ENCODE measurements at regions of chr1 and their contacts with region 1.

Region 1: GRCh38 chr1:84603941-84604830 is 29.9 kb upstream of the CTBS start:
- DNase-seq: peak; percentile 91
- H3K4me3 ChIP-seq: peak overlapping the region in 2 of 3 experiments; percentile 11 to 46
- H3K27ac ChIP-seq: peak overlapping the region; percentile 88
- H3K4me1 ChIP-seq: peaks cover 30% of the 10 kb centered on the region
- H3K27me3 ChIP-seq: no peaks in the 10 kb centered on the region
- CTCF ChIP-seq: peak; percentile 66 to 77
- POLR2A ChIP-seq: no peak

Region 2: GRCh38 chr1:83931658-83932253 is 672.4 kb before region 1 on chr1:
- CTCF ChIA-PET with region 1: interaction called, 9 read pairs
- POLR2A ChIA-PET with region 1: no interaction called
- dilution Hi-C with region 1: no loop called
- intact Hi-C with region 1: loop called (anchors 1 kb)
- DNase-seq: peak; percentile 48
- H3K4me3 ChIP-seq: no peak overlapping the region
- H3K27ac ChIP-seq: no peak overlapping the region
- H3K4me1 ChIP-seq: no peaks in the 10 kb centered on the region
- H3K27me3 ChIP-seq: no peaks in the 10 kb centered on the region
- CTCF ChIP-seq: peak; percentile 33 to 42
- POLR2A ChIP-seq: no peak

Region 3: GRCh38 chr1:84298328-84298683 is 305.9 kb before region 1 on chr1:
- CTCF ChIA-PET with region 1: no interaction called
- POLR2A ChIA-PET with region 1: no interaction called
- dilution Hi-C with region 1: no loop called
- intact Hi-C with region 1: loop called (anchors 1 kb)
- DNase-seq: peak; percentile 61
- H3K4me3 ChIP-seq: peak overlapping the region; percentile 72 to 94 (median 78)
- H3K27ac ChIP-seq: peak overlapping the region; percentile 75
- H3K4me1 ChIP-seq: peaks cover 46% of the 10 kb centered on the region
- H3K27me3 ChIP-seq: no peaks in the 10 kb centered on the region
- CTCF ChIP-seq: no peak
- POLR2A ChIP-seq: peak; percentile 73

Region 4: DNA sequence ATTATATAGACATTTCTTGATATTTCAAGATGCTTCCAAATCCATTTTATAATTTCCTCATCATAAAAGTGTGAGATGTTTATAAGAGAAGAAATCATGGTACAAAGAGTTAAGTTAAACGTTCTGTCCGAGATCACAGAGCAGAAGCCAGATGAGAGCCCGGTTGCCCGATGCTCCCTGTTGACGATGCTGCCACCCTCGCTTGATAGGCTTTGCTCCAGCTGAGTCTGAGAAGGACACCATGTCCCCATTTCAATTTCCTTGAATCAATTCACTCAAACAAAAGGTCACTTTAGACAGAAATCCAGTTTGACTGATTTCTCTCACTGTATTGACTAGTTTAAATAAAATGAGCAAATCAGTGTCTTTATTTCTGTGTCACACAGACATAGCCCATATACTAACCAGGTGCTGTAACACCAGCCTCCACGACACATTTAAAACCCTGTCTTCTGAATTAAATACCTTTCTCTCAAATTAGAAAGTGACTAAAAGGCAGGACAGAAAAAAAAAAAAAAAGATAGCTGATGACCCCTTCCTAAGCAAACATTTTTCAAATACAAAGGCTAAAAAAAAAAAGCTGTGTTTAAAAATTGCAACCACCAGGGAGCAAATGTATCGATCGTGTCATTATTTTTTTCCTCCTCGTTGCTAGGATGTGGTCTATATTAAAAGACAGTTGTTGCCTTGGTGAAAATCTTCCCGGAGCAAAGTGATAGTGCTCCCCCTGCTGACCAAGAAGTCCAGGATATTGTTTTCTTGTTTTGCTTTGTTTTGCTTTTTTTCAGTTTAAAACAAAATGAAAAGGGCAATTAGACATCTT is 170.7 kb before region 1 on chr1:
- CTCF ChIA-PET with region 1: interaction called, 7 read pairs
- POLR2A ChIA-PET with region 1: no interaction called
- dilution Hi-C with region 1: loop called (anchors 25 kb)
- intact Hi-C with region 1: loop called (anchors 2 kb)
- DNase-seq: peak; percentile 81
- H3K4me3 ChIP-seq: peak overlapping the region in 1 of 3 experiments; percentile 52
- H3K27ac ChIP-seq: peak overlapping the region; percentile 69
- H3K4me1 ChIP-seq: peaks cover 5% of the 10 kb centered on the region
- H3K27me3 ChIP-seq: no peaks in the 10 kb centered on the region
- CTCF ChIP-seq: peak; percentile 64 to 67
- POLR2A ChIP-seq: no peak

Region 5: DNA sequence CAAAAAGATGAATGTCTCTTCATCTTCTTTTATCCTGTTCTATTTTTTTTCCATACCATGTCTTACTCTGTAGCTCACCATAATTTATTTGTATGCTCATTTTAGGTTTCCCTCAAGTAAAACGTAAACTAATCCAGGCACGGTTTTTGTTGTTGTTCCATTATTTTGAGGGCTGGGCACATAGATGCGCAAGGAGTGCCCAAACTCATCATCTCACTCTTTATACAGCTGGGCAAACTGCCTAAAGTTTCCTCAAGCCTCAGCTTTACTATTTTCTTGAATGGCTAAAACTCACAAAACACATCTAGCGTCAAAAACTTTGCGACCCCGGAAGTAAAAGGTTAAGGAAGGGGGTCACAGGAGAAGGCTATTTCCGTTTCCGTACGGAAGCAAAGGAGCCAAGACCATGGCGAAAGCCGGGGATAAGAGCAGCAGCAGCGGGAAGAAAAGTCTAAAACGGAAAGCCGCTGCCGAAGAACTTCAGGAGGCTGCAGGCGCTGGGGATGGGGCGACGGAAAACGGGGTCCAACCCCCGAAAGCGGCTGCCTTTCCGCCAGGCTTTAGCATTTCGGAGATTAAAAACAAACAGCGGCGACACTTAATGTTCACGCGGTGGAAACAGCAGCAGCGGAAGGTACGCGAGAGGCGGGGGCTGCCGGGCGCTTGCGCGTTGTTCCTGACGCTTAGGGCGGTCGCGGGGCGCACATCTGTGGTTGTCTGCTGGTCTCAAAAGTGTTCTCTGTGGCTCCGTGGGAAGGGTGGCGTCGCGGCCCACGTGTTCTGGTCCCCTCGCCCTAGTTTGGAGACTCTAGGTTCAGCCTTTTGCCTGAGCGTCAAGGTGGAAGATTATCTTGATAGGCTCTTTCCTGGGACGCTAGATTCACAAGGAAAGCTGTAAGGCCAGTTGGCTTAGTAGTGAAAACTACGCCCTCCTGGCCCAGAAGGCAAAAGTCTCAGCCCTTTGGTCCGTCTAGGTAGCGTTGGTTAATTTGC is 125.0 kb before region 1 on chr1 and contains the start of gene RPF1:
- CTCF ChIA-PET with region 1: interaction called, 18 read pairs
- POLR2A ChIA-PET with region 1: interaction called, 3 read pairs
- dilution Hi-C with region 1: no loop called
- intact Hi-C with region 1: loop called (anchors 1 kb)
- DNase-seq: peak; percentile 85
- H3K4me3 ChIP-seq: peak within 1 kb of the TSS; percentile 59 to 95 (median 64)
- H3K27ac ChIP-seq: peak within 1 kb of the TSS; percentile 66
- H3K4me1 ChIP-seq: peaks cover 17% of the 10 kb centered on the region
- H3K27me3 ChIP-seq: no peaks in the 10 kb centered on the region
- CTCF ChIP-seq: no peak
- POLR2A ChIP-seq: peak; percentile 68
- total RNA-seq, gene RPF1: 32.6 and 34.3 TPM in 2 replicates

Region 6: GRCh38 chr1:84573967-84574842 is 30.0 kb before region 1 on chr1 and contains the start of gene CTBS:
- CTCF ChIA-PET with region 1: interaction called, 17 read pairs
- POLR2A ChIA-PET with region 1: interaction called, 19 read pairs
- dilution Hi-C with region 1: no loop called
- intact Hi-C with region 1: loop called (anchors 1 kb)
- DNase-seq: peak; percentile 85
- H3K4me3 ChIP-seq: peak within 1 kb of the TSS; percentile 40 to 69 (median 62)
- H3K27ac ChIP-seq: peak within 1 kb of the TSS; percentile 98
- H3K4me1 ChIP-seq: peaks cover 17% of the 10 kb centered on the region
- H3K27me3 ChIP-seq: no peaks in the 10 kb centered on the region
- CTCF ChIP-seq: no peak
- POLR2A ChIP-seq: peak; percentile 86
- total RNA-seq, gene CTBS: 10.7 and 14.3 TPM in 2 replicates

Region 7: DNA sequence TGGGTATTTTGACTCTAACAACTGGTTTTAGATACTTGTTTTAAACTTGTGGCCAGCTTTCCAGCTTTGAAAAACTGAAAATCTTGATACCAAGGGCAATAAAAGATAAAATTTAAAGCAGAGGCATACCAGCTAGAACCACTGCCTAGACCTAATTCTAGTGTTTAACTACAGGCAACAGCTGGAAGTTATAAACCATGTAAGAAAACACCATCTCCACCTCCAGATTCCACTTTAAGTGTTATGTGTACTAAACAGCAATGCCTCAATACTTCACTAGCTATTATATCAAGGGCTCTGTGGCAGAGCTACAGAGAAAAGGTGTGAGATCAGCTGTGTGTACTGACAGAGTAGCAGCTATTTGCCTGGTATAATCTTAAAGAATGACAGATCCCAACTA is 219.3 kb after region 1 on chr1:
- CTCF ChIA-PET with region 1: no interaction called
- POLR2A ChIA-PET with region 1: no interaction called
- dilution Hi-C with region 1: no loop called
- intact Hi-C with region 1: no loop called
- DNase-seq: no peak
- H3K4me3 ChIP-seq: no peak overlapping the region
- H3K27ac ChIP-seq: no peak overlapping the region
- H3K4me1 ChIP-seq: no peaks in the 10 kb centered on the region
- H3K27me3 ChIP-seq: peaks cover 20 to 28% of the 10 kb centered on the region in 2 experiments
- CTCF ChIP-seq: no peak
- POLR2A ChIP-seq: no peak

Measured in endothelial cell of umbilical vein (primary cell).